ENCODE measurements at regions of chr4 and their contacts with region 1.

Region 1: DNA sequence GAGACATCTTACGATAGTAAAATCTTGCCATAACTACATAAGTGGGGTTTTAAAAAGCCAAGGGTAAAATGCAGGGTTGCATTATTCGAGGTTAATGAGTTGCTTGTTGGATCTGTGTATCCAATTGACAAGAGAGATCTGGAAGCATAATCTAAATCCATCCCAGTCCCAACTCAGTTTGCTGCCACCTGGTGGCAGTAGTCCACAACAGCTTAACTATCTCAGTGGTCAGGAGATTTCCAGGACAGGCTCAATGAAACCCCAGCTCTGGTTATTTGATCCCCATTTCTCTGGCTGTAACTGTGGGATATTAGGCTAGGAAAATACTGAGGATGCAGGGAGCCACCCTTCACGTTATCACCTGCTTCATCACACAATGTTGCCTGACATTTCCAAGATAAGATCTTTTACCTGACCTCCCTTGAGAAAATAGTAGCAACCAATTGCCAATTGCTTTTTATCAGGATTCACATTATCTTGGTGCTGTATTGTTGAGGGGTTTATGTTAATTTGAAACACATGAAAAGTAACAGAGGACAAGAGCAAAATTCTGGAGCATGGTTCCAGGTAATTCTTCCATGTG is 88.2 kb upstream of the TNIP3 start:
- DNase-seq: peak; percentile 76
- H3K4me3 ChIP-seq: no peak overlapping the region
- H3K27ac ChIP-seq: no peak overlapping the region
- H3K4me1 ChIP-seq: peaks cover 16% of the 10 kb centered on the region
- H3K27me3 ChIP-seq: no peaks in the 10 kb centered on the region

Region 2: DNA sequence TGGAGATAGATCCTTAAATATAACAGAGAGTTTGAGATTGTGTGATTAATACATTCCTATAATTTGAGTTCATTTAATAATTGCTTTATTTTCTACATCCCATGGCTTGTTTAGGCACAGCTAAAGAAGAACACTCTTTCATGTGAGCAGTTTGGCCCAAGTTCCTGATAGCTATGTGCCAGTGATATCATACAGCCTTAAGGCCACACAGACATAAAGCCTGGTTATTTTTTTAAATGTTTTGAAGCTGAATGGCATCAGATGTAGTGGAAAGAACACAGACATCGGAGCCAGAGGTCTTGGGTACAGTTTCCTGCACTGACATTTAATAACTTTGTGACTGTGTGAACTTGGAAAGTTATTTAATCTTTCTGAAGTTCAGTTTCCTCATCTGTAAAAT is 172.9 kb before region 1 on chr4:
- in situ Hi-C with region 1: no loop called
- DNase-seq: no peak
- H3K4me3 ChIP-seq: no peak overlapping the region
- H3K27ac ChIP-seq: no peak overlapping the region
- H3K4me1 ChIP-seq: no peaks in the 10 kb centered on the region
- H3K27me3 ChIP-seq: no peaks in the 10 kb centered on the region

Region 3: GRCh38 chr4:121192480-121192879 is 59.8 kb before region 1 on chr4:
- in situ Hi-C with region 1: loop called (anchors 10 kb)
- DNase-seq: peak; percentile 73
- H3K4me3 ChIP-seq: peak overlapping the region; percentile 54
- H3K27ac ChIP-seq: no peak overlapping the region
- H3K4me1 ChIP-seq: peaks cover 5% of the 10 kb centered on the region; the same call in 1 of the 2 replicates
- H3K27me3 ChIP-seq: no peaks in the 10 kb centered on the region

Measured in GM23248 (cell line).